ENCODE measurements at regions of chr1 and their contacts with region 1.

Region 1: GRCh38 chr1:90707363-90707710 is 9.8 kb downstream of the BARHL2 start:
- DNase-seq: peak; percentile 82
- H3K4me3 ChIP-seq: peak overlapping the region; percentile 50
- H3K27ac ChIP-seq: peak overlapping the region; percentile 91
- H3K4me1 ChIP-seq: peaks cover 55% of the 10 kb centered on the region
- H3K27me3 ChIP-seq: no peaks in the 10 kb centered on the region
- CTCF ChIP-seq: no peak

Region 2: GRCh38 chr1:90067194-90067931 is 640.0 kb before region 1 on chr1:
- CTCF ChIA-PET with region 1: no interaction called
- POLR2A ChIA-PET with region 1: no interaction called
- intact Hi-C with region 1: loop called (anchors 1 kb)
- DNase-seq: peak; percentile 96
- H3K4me3 ChIP-seq: no peak overlapping the region
- H3K27ac ChIP-seq: peak overlapping the region; percentile 95
- H3K4me1 ChIP-seq: peaks cover 55% of the 10 kb centered on the region
- H3K27me3 ChIP-seq: no peaks in the 10 kb centered on the region
- CTCF ChIP-seq: no peak

Region 3: GRCh38 chr1:90114521-90115141 is 592.7 kb before region 1 on chr1:
- CTCF ChIA-PET with region 1: no interaction called
- POLR2A ChIA-PET with region 1: no interaction called
- intact Hi-C with region 1: loop called (anchors 1 kb)
- DNase-seq: peak; percentile 90
- H3K4me3 ChIP-seq: no peak overlapping the region
- H3K27ac ChIP-seq: no peak overlapping the region
- H3K4me1 ChIP-seq: peaks cover 26% of the 10 kb centered on the region
- H3K27me3 ChIP-seq: no peaks in the 10 kb centered on the region
- CTCF ChIP-seq: peak; percentile 86

Region 4: GRCh38 chr1:90313757-90314156 is 393.6 kb before region 1 on chr1:
- CTCF ChIA-PET with region 1: no interaction called
- POLR2A ChIA-PET with region 1: no interaction called
- intact Hi-C with region 1: loop called (anchors 1 kb)
- DNase-seq: peak; percentile 57
- H3K4me3 ChIP-seq: no peak overlapping the region
- H3K27ac ChIP-seq: peak overlapping the region; percentile 66
- H3K4me1 ChIP-seq: peaks cover 62% of the 10 kb centered on the region
- H3K27me3 ChIP-seq: no peaks in the 10 kb centered on the region
- CTCF ChIP-seq: no peak

Region 5: DNA sequence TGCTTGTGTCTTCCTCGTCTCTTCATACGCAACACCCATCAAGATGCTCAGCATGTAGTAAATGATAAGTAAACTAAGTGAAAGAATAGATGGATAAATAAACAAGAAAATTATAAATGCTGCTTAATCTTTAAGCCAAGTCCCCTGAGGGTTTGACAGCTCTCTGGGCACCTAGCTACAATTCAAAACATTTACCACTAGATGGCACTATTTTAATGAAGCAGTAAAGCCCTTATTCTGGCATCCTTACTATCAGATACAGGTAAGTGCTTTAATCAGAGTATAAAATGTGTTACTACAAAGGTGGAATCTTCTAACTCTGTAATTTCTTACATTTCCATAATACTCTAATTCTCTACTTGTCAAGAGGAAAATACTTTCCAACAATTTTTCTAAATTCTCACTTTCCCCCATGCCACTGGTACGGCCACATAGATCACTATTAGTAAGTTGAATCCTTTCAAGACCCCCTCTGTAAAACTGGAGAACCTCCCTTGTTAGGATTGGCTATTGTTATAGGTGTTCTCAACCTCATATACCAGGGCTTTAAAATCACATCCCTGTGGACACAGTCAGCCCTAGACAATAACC is 128.0 kb before region 1 on chr1:
- CTCF ChIA-PET with region 1: interaction called, 7 read pairs
- POLR2A ChIA-PET with region 1: no interaction called
- intact Hi-C with region 1: loop called (anchors 2 kb)
- DNase-seq: peak; percentile 80
- H3K4me3 ChIP-seq: no peak overlapping the region
- H3K27ac ChIP-seq: no peak overlapping the region
- H3K4me1 ChIP-seq: peaks cover 3% of the 10 kb centered on the region
- H3K27me3 ChIP-seq: no peaks in the 10 kb centered on the region
- CTCF ChIP-seq: peak; percentile 83

Region 6: GRCh38 chr1:90616395-90616794 is 90.9 kb before region 1 on chr1:
- CTCF ChIA-PET with region 1: no interaction called
- POLR2A ChIA-PET with region 1: interaction called, 3 read pairs
- intact Hi-C with region 1: loop called (anchors 1 kb)
- DNase-seq: peak; percentile 73
- H3K4me3 ChIP-seq: no peak overlapping the region
- H3K27ac ChIP-seq: no peak overlapping the region
- H3K4me1 ChIP-seq: peaks cover 32% of the 10 kb centered on the region
- H3K27me3 ChIP-seq: no peaks in the 10 kb centered on the region
- CTCF ChIP-seq: peak; percentile 70

Region 7: DNA sequence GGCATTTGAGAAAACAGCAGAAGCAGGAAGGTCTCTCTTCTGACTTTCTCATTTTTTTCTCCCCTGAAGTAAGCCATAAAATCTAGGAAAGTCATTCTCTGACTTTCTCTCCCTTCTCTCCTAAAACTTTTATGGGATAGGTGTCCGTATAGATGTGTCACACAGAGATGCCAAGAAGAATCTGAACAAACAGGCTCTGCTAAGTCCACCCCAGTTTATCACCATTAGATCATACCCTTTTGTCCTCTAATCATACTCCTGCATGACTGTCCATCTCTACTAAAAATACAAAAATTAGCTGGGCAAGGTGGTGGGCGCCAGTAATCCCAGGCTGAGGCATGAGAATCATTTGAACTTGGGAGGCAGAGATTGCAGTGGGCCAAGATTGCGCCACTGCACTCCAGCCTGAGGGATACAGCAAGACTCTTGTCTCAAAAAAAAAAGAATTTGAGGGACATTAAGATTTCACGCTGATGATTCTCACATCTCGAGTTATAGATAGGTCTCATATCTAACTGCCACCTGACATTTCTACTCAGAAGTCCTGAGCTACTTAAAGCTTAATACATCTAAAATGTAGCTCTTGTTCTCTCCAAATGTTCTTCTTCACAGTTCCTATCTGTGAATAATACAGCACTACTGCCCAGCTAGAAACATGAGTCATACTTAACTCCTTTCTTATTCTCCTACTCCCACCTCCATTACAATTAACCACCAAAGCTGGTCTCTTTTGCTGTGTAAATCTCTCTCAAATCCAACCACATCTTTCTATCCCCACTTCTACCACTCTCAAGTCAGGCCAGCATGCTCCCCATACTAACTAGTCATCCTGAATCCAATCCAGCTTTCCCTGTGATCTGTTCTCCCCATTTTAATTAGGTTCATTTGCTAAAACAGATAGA is 266.8 kb after region 1 on chr1:
- CTCF ChIA-PET with region 1: no interaction called
- POLR2A ChIA-PET with region 1: no interaction called
- intact Hi-C with region 1: no loop called
- DNase-seq: peak; percentile 64
- H3K4me3 ChIP-seq: no peak overlapping the region
- H3K27ac ChIP-seq: peak overlapping the region; percentile 53
- H3K4me1 ChIP-seq: peaks cover 25% of the 10 kb centered on the region
- H3K27me3 ChIP-seq: no peaks in the 10 kb centered on the region
- CTCF ChIP-seq: no peak